Activated CD8-positive, alpha-beta T cell treated with anti-CD3 and anti-CD28 coated beads, Interleukin-2, amount 10 ng/mL, durations not matched to agents 7 days and 5 days (primary cell): ENCODE measurements at regions of chr10 and their contacts with region 1.

Region 1: GRCh38 chr10:91006001-91006751 is 85.3 kb upstream of the ANKRD1 start:
- DNase-seq: peak; percentile 80
- ATAC-seq: peak; percentile 75
- H3K4me3 Mint-ChIP-seq: peak overlapping the region; percentile 56
- H3K27ac Mint-ChIP-seq: peak overlapping the region; percentile 78
- H3K4me1 Mint-ChIP-seq: peaks cover 38% of the 10 kb centered on the region
- H3K27me3 Mint-ChIP-seq: peaks cover 15% of the 10 kb centered on the region

Region 2: DNA sequence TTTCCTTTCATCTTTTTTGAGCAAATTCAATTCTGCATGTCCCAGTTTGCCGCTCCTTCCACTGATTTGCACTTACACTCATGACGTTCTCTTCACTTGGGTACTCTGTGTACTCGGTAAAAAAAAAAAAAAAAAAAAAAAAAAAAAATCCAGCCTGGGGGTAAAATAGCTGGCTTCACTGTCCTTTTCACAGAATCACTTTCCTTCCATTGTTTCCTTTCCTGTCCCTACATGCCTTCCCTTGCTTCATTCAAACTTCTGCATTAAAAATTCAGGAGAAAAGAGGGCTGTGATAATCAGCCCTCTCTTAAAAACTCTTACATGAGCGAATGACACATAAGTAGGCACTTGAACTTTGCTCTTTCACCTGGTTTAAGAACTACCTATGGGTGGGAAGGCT is 94.0 kb before region 1 on chr10:
- CTCF ChIA-PET with region 1: interaction called, 43 read pairs
- POLR2A ChIA-PET with region 1: no interaction called
- DNase-seq: no peak
- ATAC-seq: no peak
- H3K4me3 Mint-ChIP-seq: no peak overlapping the region
- H3K27ac Mint-ChIP-seq: no peak overlapping the region
- H3K4me1 Mint-ChIP-seq: peaks cover 2% of the 10 kb centered on the region
- H3K27me3 Mint-ChIP-seq: peaks cover 7% of the 10 kb centered on the region

Region 3: DNA sequence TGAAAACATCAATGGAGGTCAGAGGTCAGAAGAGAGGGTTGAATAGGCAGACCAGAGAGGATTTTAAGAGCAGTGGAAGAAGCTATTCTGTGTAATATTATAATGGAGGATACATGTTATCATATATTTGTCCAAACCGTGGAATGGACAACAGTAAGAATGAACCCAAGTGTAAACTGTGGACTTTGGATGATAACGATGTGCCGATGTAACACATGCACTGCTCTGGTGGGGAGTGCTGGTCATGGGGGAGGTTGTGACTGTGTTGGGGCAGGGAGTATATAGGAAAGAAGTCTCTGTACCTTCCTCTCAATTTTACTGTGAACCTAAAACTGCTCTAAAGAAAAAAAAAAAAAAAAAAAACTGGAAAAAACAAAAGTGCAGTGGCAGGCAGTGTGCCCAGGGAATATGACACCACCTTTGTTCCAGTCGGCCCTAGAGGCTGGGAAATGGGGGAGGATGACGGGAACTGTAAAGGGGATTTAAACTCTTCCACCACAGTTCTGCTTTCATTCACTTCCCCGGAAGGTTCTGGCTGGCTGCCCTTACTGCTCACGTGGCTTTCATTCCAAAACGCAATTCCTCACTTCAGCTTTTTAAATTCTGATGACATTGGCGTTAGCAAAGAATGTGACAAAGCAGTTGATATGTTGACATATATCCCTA is 28.5 kb after region 1 on chr10:
- CTCF ChIA-PET with region 1: interaction called, 31 read pairs
- POLR2A ChIA-PET with region 1: no interaction called
- DNase-seq: no peak
- ATAC-seq: peak; percentile 10
- H3K4me3 Mint-ChIP-seq: peak overlapping the region; percentile 19
- H3K27ac Mint-ChIP-seq: peak overlapping the region; percentile 92
- H3K4me1 Mint-ChIP-seq: peaks cover 34% of the 10 kb centered on the region
- H3K27me3 Mint-ChIP-seq: peaks cover 3% of the 10 kb centered on the region

Region 4: GRCh38 chr10:91163269-91163868 is 157.2 kb after region 1 on chr10:
- CTCF ChIA-PET with region 1: interaction called, 23 read pairs
- POLR2A ChIA-PET with region 1: interaction called, 4 read pairs
- DNase-seq: peak; percentile 84
- ATAC-seq: peak; percentile 70
- H3K4me3 Mint-ChIP-seq: peak overlapping the region; percentile 84
- H3K27ac Mint-ChIP-seq: peak overlapping the region; percentile 83
- H3K4me1 Mint-ChIP-seq: peaks cover 32% of the 10 kb centered on the region
- H3K27me3 Mint-ChIP-seq: no peaks in the 10 kb centered on the region

Region 5: GRCh38 chr10:91227576-91227975 is 221.4 kb after region 1 on chr10:
- CTCF ChIA-PET with region 1: interaction called, 13 read pairs
- POLR2A ChIA-PET with region 1: no interaction called
- DNase-seq: no peak
- ATAC-seq: peak; percentile 54
- H3K4me3 Mint-ChIP-seq: peak overlapping the region; percentile 20
- H3K27ac Mint-ChIP-seq: peak overlapping the region; percentile 69
- H3K4me1 Mint-ChIP-seq: peaks cover 53% of the 10 kb centered on the region
- H3K27me3 Mint-ChIP-seq: no peaks in the 10 kb centered on the region

Region 6: DNA sequence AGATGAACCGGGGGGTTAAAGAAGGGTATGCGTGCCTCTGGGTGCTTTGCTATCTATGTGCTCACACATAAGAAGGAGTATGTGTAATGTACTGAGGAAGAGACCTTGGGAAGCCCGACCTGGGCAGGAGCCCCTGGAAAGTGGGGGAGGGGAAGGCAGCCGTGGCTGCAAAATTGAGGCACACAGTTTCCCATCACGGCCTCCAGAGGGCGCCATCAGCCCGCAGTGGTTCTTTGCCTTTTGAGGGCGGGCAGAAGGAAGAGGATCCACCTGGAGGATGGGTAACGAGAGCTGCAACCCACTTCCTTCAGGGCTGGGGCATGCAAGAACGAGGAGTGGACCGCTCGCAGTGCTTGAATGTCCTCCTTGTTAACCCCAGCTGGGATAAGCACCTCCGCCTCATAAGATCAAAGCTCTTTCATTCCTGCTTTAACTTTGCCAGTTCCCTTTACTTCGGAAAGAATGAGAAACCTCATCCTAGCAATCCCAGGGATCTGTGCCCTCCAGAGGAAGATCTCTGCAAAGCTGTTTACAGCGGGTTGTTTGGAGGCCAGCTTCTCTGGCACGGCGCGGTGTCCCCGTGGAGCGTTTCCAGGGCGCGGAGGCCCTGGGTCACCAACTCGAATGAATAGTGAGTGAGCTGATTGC is 292.2 kb after region 1 on chr10:
- CTCF ChIA-PET with region 1: interaction called, 24 read pairs
- POLR2A ChIA-PET with region 1: no interaction called
- DNase-seq: peak; percentile 87
- ATAC-seq: peak; percentile 96
- H3K4me3 Mint-ChIP-seq: peak overlapping the region; percentile 61
- H3K27ac Mint-ChIP-seq: peak overlapping the region; percentile 10
- H3K4me1 Mint-ChIP-seq: peaks cover 17% of the 10 kb centered on the region
- H3K27me3 Mint-ChIP-seq: peaks cover 21% of the 10 kb centered on the region